Mammary epithelial cell (primary cell): ENCODE measurements at regions of chr16 and their contacts with region 1.

Region 1: DNA sequence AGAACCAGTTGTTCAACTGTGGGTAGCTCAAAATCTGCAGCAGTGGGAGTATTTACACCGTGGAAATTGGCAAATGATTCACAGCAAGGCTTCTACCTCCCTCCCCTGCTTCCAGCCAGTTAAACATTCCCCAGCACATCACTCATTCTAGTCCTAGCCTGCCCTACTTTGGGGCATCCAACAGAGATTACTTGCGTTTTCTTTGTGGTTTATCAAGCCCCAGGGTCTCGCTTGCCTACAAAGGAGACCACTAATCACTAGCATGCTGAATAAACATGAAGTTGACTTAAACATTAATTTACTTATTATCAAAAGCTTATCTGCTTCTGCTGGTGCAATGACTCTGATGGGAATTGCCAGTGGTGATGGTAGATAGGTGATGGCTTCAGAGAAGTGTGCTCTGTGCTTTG is 94.5 kb downstream of the MARF1 start:
- DNase-seq: no peak
- H3K4me3 ChIP-seq: no peak overlapping the region
- H3K27ac ChIP-seq: no peak overlapping the region
- H3K4me1 ChIP-seq: no peaks in the 10 kb centered on the region
- H3K27me3 ChIP-seq: no peaks in the 10 kb centered on the region
- CTCF ChIP-seq: no peak

Region 2: DNA sequence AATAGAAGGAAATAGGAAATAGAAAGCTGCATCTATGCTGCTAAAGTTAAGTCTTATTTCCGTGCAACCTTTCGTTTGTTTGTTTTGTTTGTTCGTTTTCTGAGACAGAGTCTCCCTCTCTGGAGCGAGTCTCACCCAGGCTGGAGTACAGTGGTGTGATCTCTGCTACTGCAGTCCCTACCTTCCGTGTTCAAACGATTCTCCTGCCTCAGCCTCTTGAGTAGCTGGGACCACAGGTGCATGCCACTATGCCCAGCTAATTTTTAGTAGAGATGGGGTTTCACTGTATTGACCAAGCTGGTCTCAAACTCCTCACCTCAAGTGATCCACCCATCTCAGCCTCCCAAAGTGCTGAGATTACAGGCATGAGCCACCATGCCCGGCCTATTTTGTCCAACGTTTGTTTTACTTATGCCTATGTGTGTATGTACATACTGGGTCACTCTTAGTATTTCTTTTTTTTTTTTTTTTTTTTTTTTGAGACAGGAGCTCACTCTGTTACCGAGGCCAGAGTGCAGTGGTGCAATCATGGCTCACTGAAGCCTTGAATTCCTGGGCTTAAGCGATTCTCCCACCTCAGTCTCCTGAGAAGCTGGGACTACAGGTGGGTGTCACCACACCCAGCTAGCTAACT is 97.3 kb before region 1 on chr16:
- CTCF ChIA-PET with region 1: interaction called, 15 read pairs
- dilution Hi-C with region 1: no loop called
- in situ Hi-C with region 1: no loop called
- intact Hi-C with region 1: no loop called
- DNase-seq: no peak
- H3K4me3 ChIP-seq: no peak overlapping the region
- H3K27ac ChIP-seq: no peak overlapping the region
- H3K4me1 ChIP-seq: no peaks in the 10 kb centered on the region
- H3K27me3 ChIP-seq: no peaks in the 10 kb centered on the region
- CTCF ChIP-seq: no peak

Region 3: GRCh38 chr16:15482068-15482747 is 66.3 kb before region 1 on chr16:
- CTCF ChIA-PET with region 1: no interaction called
- dilution Hi-C with region 1: no loop called
- in situ Hi-C with region 1: no loop called
- intact Hi-C with region 1: loop called (anchors 5 kb)
- DNase-seq: peak; percentile 98
- H3K4me3 ChIP-seq: no peak overlapping the region
- H3K27ac ChIP-seq: peak overlapping the region; percentile 32
- H3K4me1 ChIP-seq: peaks cover 13% of the 10 kb centered on the region
- H3K27me3 ChIP-seq: no peaks in the 10 kb centered on the region
- CTCF ChIP-seq: peak in 1 of 2 donors; percentile 31

Region 4: DNA sequence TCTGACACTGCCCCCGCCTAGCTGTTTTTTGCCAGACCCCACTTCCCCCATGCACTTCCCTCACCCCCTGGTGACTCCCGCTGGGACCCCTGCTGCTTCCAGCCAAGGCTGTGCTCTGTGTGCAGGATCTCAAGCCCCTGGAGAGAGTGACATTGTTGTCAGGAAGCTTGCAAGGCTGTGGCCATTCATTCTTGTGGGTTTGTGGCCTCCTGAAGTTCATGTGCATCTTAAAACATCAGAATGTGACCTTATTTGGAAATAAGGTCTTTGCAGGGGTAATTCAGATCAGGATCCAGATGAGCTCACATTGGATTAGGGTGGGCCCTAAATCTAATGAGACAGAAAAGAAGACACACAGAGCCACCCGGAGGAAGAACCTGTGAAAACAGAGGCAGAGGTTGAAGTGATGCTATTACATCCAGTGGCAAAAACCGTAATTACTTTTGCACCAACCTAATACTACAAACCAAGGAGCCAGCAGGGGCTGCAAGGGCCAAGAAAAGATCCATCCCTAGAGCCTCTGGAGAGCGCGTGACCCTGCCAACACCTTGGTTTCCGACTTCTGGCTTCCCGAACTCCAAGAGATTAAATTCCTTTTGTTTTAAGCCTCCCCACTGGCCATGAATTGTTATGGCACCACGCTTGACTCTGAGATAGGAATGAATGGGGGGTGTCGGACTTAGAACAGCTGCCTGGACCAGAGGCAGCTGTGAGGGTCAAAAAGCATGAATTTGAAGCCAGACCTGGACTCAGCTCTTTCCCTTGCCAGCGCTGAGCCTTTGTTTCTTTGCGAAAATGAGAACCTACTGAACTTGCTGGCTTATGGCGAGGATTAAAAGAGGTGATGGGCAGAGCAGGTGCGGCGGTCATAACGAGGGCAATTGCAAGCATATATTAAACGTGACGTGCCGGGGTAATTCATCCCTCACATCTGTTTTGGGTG is 38.6 kb before region 1 on chr16:
- CTCF ChIA-PET with region 1: interaction called, 6 read pairs
- dilution Hi-C with region 1: loop called (anchors 5 kb)
- in situ Hi-C with region 1: no loop called
- intact Hi-C with region 1: no loop called
- DNase-seq: no peak
- H3K4me3 ChIP-seq: no peak overlapping the region
- H3K27ac ChIP-seq: no peak overlapping the region
- H3K4me1 ChIP-seq: peaks cover 12% of the 10 kb centered on the region
- H3K27me3 ChIP-seq: no peaks in the 10 kb centered on the region
- CTCF ChIP-seq: no peak

Region 5: DNA sequence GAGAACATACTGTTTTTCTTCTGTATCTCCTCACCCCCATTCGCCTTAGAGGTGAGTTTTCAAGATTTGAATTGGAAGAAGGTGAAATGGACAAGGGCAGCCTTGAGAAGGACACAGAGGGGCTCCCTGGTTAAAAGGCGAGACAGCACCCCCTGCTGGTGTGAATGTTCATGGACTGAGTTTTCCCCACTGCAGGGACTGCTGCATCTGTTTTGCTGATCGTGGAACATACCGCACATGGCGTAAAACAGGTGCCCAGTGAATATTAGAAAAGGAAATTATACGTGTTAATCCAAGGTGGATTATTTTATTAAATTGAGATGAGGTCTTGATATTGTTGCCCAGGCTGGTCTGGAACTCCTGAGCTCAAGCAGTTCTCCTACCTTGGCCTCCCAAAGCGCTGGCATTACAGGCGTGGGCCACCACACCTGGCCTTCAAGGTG is 156.1 kb after region 1 on chr16:
- CTCF ChIA-PET with region 1: no interaction called
- dilution Hi-C with region 1: no loop called
- in situ Hi-C with region 1: no loop called
- intact Hi-C with region 1: loop called (anchors 10 kb)
- DNase-seq: peak; percentile 29
- H3K4me3 ChIP-seq: no peak overlapping the region
- H3K27ac ChIP-seq: no peak overlapping the region
- H3K4me1 ChIP-seq: no peaks in the 10 kb centered on the region
- H3K27me3 ChIP-seq: no peaks in the 10 kb centered on the region
- CTCF ChIP-seq: peak; percentile 74 to 82

Region 6: DNA sequence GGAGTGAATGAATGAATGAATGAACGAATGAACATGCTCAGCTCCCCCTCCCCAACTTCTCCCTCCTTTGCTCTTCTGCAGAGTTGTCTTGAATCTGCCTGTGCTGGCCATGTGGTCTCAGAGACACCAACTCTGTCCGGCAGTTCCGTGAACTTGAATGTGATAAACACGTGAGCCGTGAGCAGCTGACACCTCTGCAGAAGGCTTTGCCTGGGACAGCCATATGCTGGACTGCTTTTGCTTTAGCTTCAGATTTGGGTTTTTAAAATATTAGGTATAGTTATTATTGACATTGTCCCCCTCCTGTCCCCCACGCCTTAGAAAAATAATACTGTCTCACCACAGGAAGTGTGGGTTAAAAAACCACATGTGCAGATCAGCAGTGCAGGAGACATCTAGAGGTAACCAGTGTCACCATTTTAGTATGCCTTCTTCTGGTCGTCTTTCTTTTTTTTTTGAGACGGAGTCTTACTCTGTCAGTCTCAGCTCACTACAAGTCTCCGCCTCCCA is 484.8 kb after region 1 on chr16:
- CTCF ChIA-PET with region 1: no interaction called
- dilution Hi-C with region 1: no loop called
- in situ Hi-C with region 1: no loop called
- intact Hi-C with region 1: no loop called
- DNase-seq: no peak
- H3K4me3 ChIP-seq: no peak overlapping the region
- H3K27ac ChIP-seq: no peak overlapping the region
- H3K4me1 ChIP-seq: no peaks in the 10 kb centered on the region
- H3K27me3 ChIP-seq: no peaks in the 10 kb centered on the region
- CTCF ChIP-seq: no peak